Mammary epithelial cell (primary cell): ENCODE measurements at regions of chr7 and their contacts with region 1.

Region 1: DNA sequence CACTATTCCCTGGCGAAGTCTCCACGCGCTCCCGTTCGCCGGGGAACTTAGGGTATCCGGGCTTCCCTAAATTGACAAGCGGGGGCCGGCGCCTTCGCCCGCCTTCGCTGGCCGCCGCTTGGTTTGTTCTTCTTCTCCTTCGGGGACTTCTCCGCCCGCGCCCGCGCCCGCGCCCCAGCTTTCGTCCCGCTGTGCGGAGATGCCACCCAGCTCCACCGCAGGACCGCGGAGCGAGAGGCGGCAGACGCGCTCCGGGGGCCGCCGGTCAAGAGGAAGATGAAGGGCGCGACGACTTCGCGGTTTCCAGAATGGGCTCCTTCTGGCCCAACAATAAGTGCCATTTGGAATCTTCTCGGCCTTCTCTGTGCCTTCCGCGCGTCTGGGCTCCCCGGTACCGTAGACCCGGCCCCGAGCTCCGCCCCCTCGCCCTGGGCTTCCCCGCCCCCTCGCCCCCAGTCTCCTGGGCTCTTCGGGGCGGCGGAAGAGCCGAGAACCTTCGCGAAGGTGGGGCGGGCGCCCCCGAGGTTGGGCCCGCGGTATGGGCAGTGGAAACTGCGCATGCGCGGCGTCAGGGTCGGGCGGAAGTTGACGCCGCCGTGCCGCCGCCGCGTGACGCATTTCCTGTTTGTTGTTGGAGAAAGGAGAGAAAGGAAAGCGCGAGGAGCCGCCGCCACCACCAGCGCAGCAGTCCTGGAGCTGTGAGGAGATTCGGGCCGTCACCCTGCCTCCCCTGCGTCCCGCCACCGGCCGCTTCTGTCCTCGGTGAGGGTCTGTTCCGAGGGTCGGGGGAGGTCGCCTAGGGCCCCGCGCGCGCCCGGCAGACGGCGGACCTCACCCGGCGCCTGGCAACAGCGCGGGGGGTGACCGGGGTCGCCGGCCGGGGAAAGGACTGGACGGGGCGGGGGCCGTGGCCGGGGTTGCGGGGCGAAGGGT is at the start of gene DNAJB6:
- DNase-seq: peak; percentile 91
- H3K4me3 ChIP-seq: peak within 1 kb of the TSS; percentile 80 to 92 (median 84)
- H3K27ac ChIP-seq: peak within 1 kb of the TSS; percentile 89
- H3K4me1 ChIP-seq: peaks cover 14% of the 10 kb centered on the region
- H3K27me3 ChIP-seq: no peaks in the 10 kb centered on the region
- CTCF ChIP-seq: no peak
- total RNA-seq, gene DNAJB6: 151 to 157 TPM

Region 2: GRCh38 chr7:156903232-156903909 is 433.3 kb before region 1 on chr7:
- CTCF ChIA-PET with region 1: no interaction called
- dilution Hi-C with region 1: no loop called
- in situ Hi-C with region 1: no loop called
- intact Hi-C with region 1: loop called (anchors 5 kb)
- DNase-seq: peak; percentile 79
- H3K4me3 ChIP-seq: no peak overlapping the region
- H3K27ac ChIP-seq: no peak overlapping the region
- H3K4me1 ChIP-seq: peaks cover 23% of the 10 kb centered on the region
- H3K27me3 ChIP-seq: no peaks in the 10 kb centered on the region
- CTCF ChIP-seq: no peak

Region 3: DNA sequence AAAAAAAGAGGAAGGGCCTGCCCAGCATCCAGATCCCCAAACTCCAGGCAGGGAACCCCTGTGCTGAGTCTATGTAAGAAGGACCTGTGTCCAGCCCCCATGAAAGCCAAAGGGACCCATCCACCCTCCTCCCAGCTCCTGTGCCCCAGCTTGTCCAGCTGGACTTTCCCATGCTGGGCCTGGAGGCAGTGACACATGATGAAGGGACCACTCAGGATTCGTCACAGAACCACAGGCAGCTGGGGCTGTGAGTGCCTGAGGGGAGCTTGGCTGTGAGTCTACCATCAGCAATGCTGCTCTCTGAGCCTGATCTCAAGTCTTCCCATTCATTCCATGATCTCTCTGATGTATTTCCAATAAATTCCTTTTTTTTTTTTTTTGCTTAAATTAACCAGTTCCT is 290.0 kb before region 1 on chr7:
- CTCF ChIA-PET with region 1: no interaction called
- dilution Hi-C with region 1: no loop called
- in situ Hi-C with region 1: no loop called
- intact Hi-C with region 1: no loop called
- DNase-seq: peak; percentile 99
- H3K4me3 ChIP-seq: no peak overlapping the region
- H3K27ac ChIP-seq: peak overlapping the region; percentile 58
- H3K4me1 ChIP-seq: peaks cover 14% of the 10 kb centered on the region
- H3K27me3 ChIP-seq: no peaks in the 10 kb centered on the region
- CTCF ChIP-seq: no peak

Region 4: GRCh38 chr7:157273208-157274093 is 63.2 kb before region 1 on chr7:
- CTCF ChIA-PET with region 1: no interaction called
- dilution Hi-C with region 1: loop called (anchors 5 kb)
- in situ Hi-C with region 1: loop called in 1 of 2 experiments (anchors 5 kb)
- intact Hi-C with region 1: loop called (anchors 1 kb)
- DNase-seq: peak; percentile 56
- H3K4me3 ChIP-seq: no peak overlapping the region
- H3K27ac ChIP-seq: no peak overlapping the region
- H3K4me1 ChIP-seq: peaks cover 36% of the 10 kb centered on the region
- H3K27me3 ChIP-seq: no peaks in the 10 kb centered on the region
- CTCF ChIP-seq: peak; percentile 85 to 94

Region 5: GRCh38 chr7:157309990-157310668 is 26.5 kb before region 1 on chr7:
- CTCF ChIA-PET with region 1: no interaction called
- dilution Hi-C with region 1: no loop called
- in situ Hi-C with region 1: no loop called
- intact Hi-C with region 1: loop called (anchors 2 kb)
- DNase-seq: peak; percentile 98
- H3K4me3 ChIP-seq: no peak overlapping the region
- H3K27ac ChIP-seq: peak overlapping the region; percentile 95
- H3K4me1 ChIP-seq: peaks cover 31% of the 10 kb centered on the region
- H3K27me3 ChIP-seq: no peaks in the 10 kb centered on the region
- CTCF ChIP-seq: no peak

Region 6: GRCh38 chr7:157386979-157387800 is 50.5 kb after region 1 on chr7:
- CTCF ChIA-PET with region 1: no interaction called
- dilution Hi-C with region 1: loop called (anchors 10 kb)
- in situ Hi-C with region 1: no loop called
- intact Hi-C with region 1: no loop called
- DNase-seq: peak; percentile 77
- H3K4me3 ChIP-seq: no peak overlapping the region
- H3K27ac ChIP-seq: peak overlapping the region; percentile 31
- H3K4me1 ChIP-seq: peaks cover 10% of the 10 kb centered on the region
- H3K27me3 ChIP-seq: no peaks in the 10 kb centered on the region
- CTCF ChIP-seq: peak; percentile 91 to 92